Lower lobe of right lung (tissue), 2 donors: ENCODE measurements at regions of chr3 and their contacts with region 1.

Region 1: GRCh38 chr3:122679085-122679881 is 1.4 kb upstream of the PARP14 start:
- DNase-seq: peak; percentile 82
- ATAC-seq: peak; percentile 74 to 82
- H3K4me3 ChIP-seq: peak overlapping the region; percentile 87
- H3K27ac ChIP-seq: peak overlapping the region; percentile 95
- H3K4me1 ChIP-seq: peaks cover 44% of the 10 kb centered on the region
- H3K27me3 ChIP-seq: no peaks in the 10 kb centered on the region
- CTCF ChIP-seq: peak; percentile 79

Region 2: GRCh38 chr3:122564155-122564912 is 114.9 kb before region 1 on chr3 and contains the starts of genes DTX3L and PARP9:
- intact Hi-C with region 1: loop called (anchors 10 kb)
- DNase-seq: peak; percentile 92
- ATAC-seq: peak; percentile 98 to 99
- H3K4me3 ChIP-seq: peak within 1 kb of the TSS; percentile 73
- H3K27ac ChIP-seq: peak within 1 kb of the TSS; percentile 98
- H3K4me1 ChIP-seq: peaks cover 70% of the 10 kb centered on the region
- H3K27me3 ChIP-seq: no peaks in the 10 kb centered on the region
- CTCF ChIP-seq: no peak
- total RNA-seq, gene DTX3L: 82.2 TPM
- total RNA-seq, gene PARP9: 90.4 TPM

Region 3: DNA sequence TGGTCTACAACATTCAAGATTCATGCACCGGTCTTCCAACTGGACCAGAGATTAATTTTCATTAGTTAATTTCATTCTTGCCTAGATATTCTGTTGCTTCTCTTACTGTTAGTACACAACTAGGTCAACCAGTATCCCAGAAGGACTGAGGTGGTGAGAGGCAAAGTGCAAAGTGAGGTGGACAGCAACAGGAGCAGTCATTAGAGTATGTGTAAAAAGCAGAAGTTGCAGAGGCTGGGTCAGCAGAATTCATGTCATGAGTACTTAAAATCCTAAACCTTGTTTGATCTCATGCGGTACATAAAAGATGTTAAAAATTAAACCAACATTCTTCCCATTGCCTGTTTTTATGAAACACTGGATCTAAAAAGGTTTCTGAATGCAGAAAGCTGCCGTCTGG is 48.0 kb after region 1 on chr3:
- intact Hi-C with region 1: no loop called
- DNase-seq: no peak
- ATAC-seq: no peak
- H3K4me3 ChIP-seq: no peak overlapping the region
- H3K27ac ChIP-seq: no peak overlapping the region
- H3K4me1 ChIP-seq: no peaks in the 10 kb centered on the region
- H3K27me3 ChIP-seq: no peaks in the 10 kb centered on the region
- CTCF ChIP-seq: no peak